IMR-90 (cell line): ENCODE measurements at regions of chr6 and their contacts with region 1.

Region 1: GRCh38 chr6:89080542-89081422 is at the start of gene PNRC1:
- DNase-seq: peak; percentile 98
- ATAC-seq: peak; percentile 86
- H3K4me3 ChIP-seq: peak within 1 kb of the TSS; percentile 77
- H3K27ac ChIP-seq: peak within 1 kb of the TSS; percentile 92
- H3K4me1 ChIP-seq: peaks cover 4% of the 10 kb centered on the region
- H3K27me3 ChIP-seq: no peaks in the 10 kb centered on the region
- CTCF ChIP-seq: 0 out of 2 replicates have a peak, but pooled peaks have one; percentile 4
- POLR2A ChIP-seq: peak; percentile 99
- RAD21 ChIP-seq: no peak
- total RNA-seq, gene PNRC1: 6.5 and 18.3 TPM in 2 replicates

Region 2: GRCh38 chr6:88982720-88983119 is 98.1 kb before region 1 on chr6:
- CTCF ChIA-PET with region 1: interaction called, 7 read pairs
- POLR2A ChIA-PET with region 1: interaction called, 3 read pairs
- dilution Hi-C with region 1: no loop called
- in situ Hi-C with region 1: loop called (anchors 10 kb)
- intact Hi-C with region 1: loop called (anchors 2 kb)
- DNase-seq: peak; percentile 79
- ATAC-seq: peak; percentile 93
- H3K4me3 ChIP-seq: no peak overlapping the region
- H3K27ac ChIP-seq: no peak overlapping the region
- H3K4me1 ChIP-seq: no peaks in the 10 kb centered on the region
- H3K27me3 ChIP-seq: peaks cover 3% of the 10 kb centered on the region; the same call in 1 of the 2 replicates
- CTCF ChIP-seq: peak; percentile 92
- POLR2A ChIP-seq: no peak
- RAD21 ChIP-seq: peak; percentile 88

Region 3: GRCh38 chr6:89058627-89059026 is 22.2 kb before region 1 on chr6:
- CTCF ChIA-PET with region 1: no interaction called
- POLR2A ChIA-PET with region 1: interaction called, 20 read pairs
- dilution Hi-C with region 1: no loop called
- in situ Hi-C with region 1: no loop called
- intact Hi-C with region 1: no loop called
- DNase-seq: no peak
- ATAC-seq: peak; percentile 61
- H3K4me3 ChIP-seq: no peak overlapping the region
- H3K27ac ChIP-seq: no peak overlapping the region
- H3K4me1 ChIP-seq: no peaks in the 10 kb centered on the region
- H3K27me3 ChIP-seq: no peaks in the 10 kb centered on the region
- CTCF ChIP-seq: no peak
- POLR2A ChIP-seq: no peak
- RAD21 ChIP-seq: no peak

Region 4: GRCh38 chr6:89145787-89146646 is 65.2 kb after region 1 on chr6 and contains the start of gene PM20D2:
- CTCF ChIA-PET with region 1: no interaction called
- POLR2A ChIA-PET with region 1: interaction called, 12 read pairs
- dilution Hi-C with region 1: no loop called
- in situ Hi-C with region 1: no loop called
- intact Hi-C with region 1: no loop called
- DNase-seq: peak; percentile 20
- ATAC-seq: peak; percentile 71
- H3K4me3 ChIP-seq: peak within 1 kb of the TSS; percentile 78
- H3K27ac ChIP-seq: peak within 1 kb of the TSS; percentile 37; the same call in 1 of the 2 replicates
- H3K4me1 ChIP-seq: peaks cover 3% of the 10 kb centered on the region; the same call in 1 of the 2 replicates
- H3K27me3 ChIP-seq: no peaks in the 10 kb centered on the region
- CTCF ChIP-seq: no peak
- POLR2A ChIP-seq: no peak
- RAD21 ChIP-seq: no peak
- total RNA-seq, gene PM20D2: 6.5 and 11.4 TPM in 2 replicates

Region 5: GRCh38 chr6:89297695-89298351 is 217.0 kb after region 1 on chr6:
- CTCF ChIA-PET with region 1: no interaction called
- POLR2A ChIA-PET with region 1: no interaction called
- dilution Hi-C with region 1: no loop called
- in situ Hi-C with region 1: no loop called
- intact Hi-C with region 1: no loop called
- DNase-seq: peak; percentile 99
- ATAC-seq: peak; percentile 84
- H3K4me3 ChIP-seq: no peak overlapping the region
- H3K27ac ChIP-seq: no peak overlapping the region
- H3K4me1 ChIP-seq: peaks cover 9% of the 10 kb centered on the region
- H3K27me3 ChIP-seq: peaks cover 17% of the 10 kb centered on the region
- CTCF ChIP-seq: no peak
- POLR2A ChIP-seq: no peak
- RAD21 ChIP-seq: no peak

Region 6: DNA sequence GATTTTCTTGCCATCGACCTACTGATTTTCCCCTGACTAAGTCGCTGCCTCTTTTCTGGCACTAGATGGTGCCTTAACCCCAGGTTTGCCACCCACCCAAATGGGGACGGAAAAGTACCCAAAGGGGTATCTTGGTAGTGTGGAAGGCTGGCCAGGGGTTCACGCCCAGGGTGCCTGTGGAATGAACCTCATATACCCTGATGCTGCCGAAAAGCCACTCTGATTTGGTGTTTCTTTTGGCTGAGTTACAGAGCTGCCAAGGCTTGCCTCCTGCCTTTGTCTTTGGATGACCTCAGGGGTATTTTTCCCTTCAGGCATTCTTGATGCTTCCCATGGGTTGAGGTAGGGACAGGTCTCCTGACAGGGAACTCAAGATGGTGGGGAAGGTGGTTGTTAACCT is 1428.0 kb after region 1 on chr6:
- CTCF ChIA-PET with region 1: no interaction called
- POLR2A ChIA-PET with region 1: interaction called, 10 read pairs
- dilution Hi-C with region 1: no loop called
- in situ Hi-C with region 1: no loop called
- intact Hi-C with region 1: no loop called
- DNase-seq: no peak
- ATAC-seq: no peak
- H3K4me3 ChIP-seq: no peak overlapping the region
- H3K27ac ChIP-seq: no peak overlapping the region
- H3K4me1 ChIP-seq: no peaks in the 10 kb centered on the region
- H3K27me3 ChIP-seq: no peaks in the 10 kb centered on the region
- CTCF ChIP-seq: no peak
- POLR2A ChIP-seq: no peak
- RAD21 ChIP-seq: no peak